ENCODE measurements at regions of chr2 and their contacts with region 1.

Region 1: GRCh38 chr2:218979846-218980734 is 4.9 kb downstream of the FEV start:
- DNase-seq: peak; percentile 78
- ATAC-seq: peak; percentile 93
- H3K4me3 Mint-ChIP-seq: peak overlapping the region; percentile 71
- H3K27ac Mint-ChIP-seq: no peak overlapping the region
- H3K4me1 Mint-ChIP-seq: peaks cover 28% of the 10 kb centered on the region
- H3K27me3 Mint-ChIP-seq: peaks cover 56% of the 10 kb centered on the region
- CTCF ChIP-seq: peak; percentile 78

Region 2: GRCh38 chr2:218876562-218877219 is 103.4 kb before region 1 on chr2:
- CTCF ChIA-PET with region 1: interaction called, 13 read pairs
- POLR2A ChIA-PET with region 1: no interaction called
- intact Hi-C with region 1: loop called (anchors 1 kb)
- DNase-seq: peak; percentile 58
- ATAC-seq: no peak
- H3K4me3 Mint-ChIP-seq: no peak overlapping the region
- H3K27ac Mint-ChIP-seq: no peak overlapping the region
- H3K4me1 Mint-ChIP-seq: peaks cover 55% of the 10 kb centered on the region
- H3K27me3 Mint-ChIP-seq: peaks cover 19% of the 10 kb centered on the region
- CTCF ChIP-seq: peak; percentile 65

Region 3: GRCh38 chr2:218959141-218959731 is 20.9 kb before region 1 on chr2 and contains the start of gene CDK5R2:
- CTCF ChIA-PET with region 1: interaction called, 13 read pairs
- POLR2A ChIA-PET with region 1: no interaction called
- intact Hi-C with region 1: loop called (anchors 1 kb)
- DNase-seq: peak; percentile 66
- ATAC-seq: peak; percentile 99
- H3K4me3 Mint-ChIP-seq: peak within 1 kb of the TSS; percentile 69
- H3K27ac Mint-ChIP-seq: no peak within 1 kb of the TSS
- H3K4me1 Mint-ChIP-seq: peaks cover 15% of the 10 kb centered on the region
- H3K27me3 Mint-ChIP-seq: peaks cover 55% of the 10 kb centered on the region
- CTCF ChIP-seq: no peak
- total RNA-seq, gene CDK5R2: 0.07 TPM in 1 of 2 replicates, not detected in the other

Region 4: DNA sequence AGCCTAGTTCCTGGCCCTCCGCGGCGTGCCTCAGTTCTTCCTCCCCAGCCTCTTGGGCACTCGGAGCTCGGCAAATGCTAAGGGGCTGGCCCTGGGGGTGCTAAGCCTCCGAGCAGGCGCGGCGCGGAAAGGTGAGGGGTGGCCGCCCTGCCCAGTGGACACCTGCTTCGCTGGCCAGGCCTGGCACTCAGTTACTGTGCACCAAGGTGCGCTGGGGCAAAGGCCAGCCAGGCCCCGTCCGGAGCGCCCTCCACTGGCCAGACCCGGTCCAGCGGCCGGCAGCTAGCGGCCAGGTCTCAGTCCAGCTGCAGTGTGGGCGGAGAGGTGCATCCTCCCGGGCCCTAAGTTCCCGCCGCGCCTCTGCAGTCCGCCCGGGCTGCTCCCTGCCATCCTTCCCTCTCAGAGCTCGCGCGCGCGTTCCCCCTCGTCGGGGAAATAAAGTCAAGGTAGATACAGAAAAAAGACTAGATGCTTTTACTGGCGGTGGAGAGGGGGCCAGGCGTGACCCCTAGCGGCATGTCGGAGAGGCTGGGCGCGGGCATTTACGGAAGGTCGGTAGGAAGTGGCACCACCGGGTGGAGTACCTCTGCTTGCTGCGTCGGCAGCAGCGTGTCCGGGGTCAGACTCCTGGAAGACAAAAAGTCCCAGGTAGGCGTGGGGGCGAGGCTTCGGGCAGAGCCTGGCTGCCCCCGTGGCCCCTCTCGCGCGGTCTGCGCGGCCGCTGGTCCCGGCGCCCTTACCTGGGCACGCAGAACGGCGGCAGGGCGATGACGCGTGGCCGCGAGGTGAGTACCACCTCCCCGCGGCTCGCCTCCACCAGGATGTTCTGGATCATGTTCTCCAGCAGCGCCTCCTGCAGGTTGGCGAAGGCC is 22.5 kb after region 1 on chr2:
- CTCF ChIA-PET with region 1: interaction called, 10 read pairs
- POLR2A ChIA-PET with region 1: no interaction called
- intact Hi-C with region 1: loop called (anchors 2 kb)
- DNase-seq: no peak
- ATAC-seq: peak; percentile 23
- H3K4me3 Mint-ChIP-seq: peak overlapping the region; percentile 75
- H3K27ac Mint-ChIP-seq: no peak overlapping the region
- H3K4me1 Mint-ChIP-seq: peaks cover 21% of the 10 kb centered on the region
- H3K27me3 Mint-ChIP-seq: peaks cover 59% of the 10 kb centered on the region
- CTCF ChIP-seq: no peak

Region 5: GRCh38 chr2:219155054-219155644 is 175.1 kb after region 1 on chr2:
- CTCF ChIA-PET with region 1: interaction called, 4 read pairs
- POLR2A ChIA-PET with region 1: no interaction called
- intact Hi-C with region 1: loop called (anchors 1 kb)
- DNase-seq: no peak
- ATAC-seq: peak; percentile 27
- H3K4me3 Mint-ChIP-seq: no peak overlapping the region
- H3K27ac Mint-ChIP-seq: no peak overlapping the region
- H3K4me1 Mint-ChIP-seq: peaks cover 7% of the 10 kb centered on the region
- H3K27me3 Mint-ChIP-seq: no peaks in the 10 kb centered on the region
- CTCF ChIP-seq: peak; percentile 77